Posterior vena cava (tissue), 2 donors: ENCODE measurements at regions of chr6 and their contacts with region 1.

Region 1: GRCh38 chr6:84774157-84774984 is 10.0 kb upstream of the TBX18 start:
- DNase-seq: peak; percentile 90

Region 2: DNA sequence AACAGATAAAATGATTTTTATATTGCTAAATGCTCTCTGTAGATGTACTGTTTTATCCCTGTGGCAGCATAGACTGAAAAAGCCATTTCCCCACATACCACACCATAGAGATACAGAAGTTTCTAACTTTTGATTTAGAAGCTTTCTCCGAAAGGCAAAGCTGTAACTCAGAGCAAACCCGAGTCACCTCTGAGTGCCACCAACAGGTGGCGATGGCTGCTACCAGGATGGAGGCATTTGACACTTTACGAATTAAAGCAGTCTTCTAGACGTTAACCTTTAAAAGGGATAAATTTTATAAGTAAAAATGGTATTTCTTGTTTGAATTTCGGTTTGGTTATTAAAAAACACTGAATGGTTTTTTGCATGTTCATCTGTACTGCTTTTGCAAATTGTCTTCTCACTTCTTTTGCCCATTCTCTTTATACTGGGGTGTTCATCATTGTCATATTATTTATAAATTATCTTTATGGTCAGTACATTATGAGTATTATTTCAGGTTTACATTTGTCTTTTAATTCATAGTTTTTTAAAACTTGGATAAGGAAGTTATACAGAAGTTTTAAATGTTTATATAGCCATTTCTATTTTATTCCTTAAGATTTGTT is 346.0 kb before region 1 on chr6:
- intact Hi-C with region 1: loop called (anchors 10 kb)
- DNase-seq: peak; percentile 86

Region 3: DNA sequence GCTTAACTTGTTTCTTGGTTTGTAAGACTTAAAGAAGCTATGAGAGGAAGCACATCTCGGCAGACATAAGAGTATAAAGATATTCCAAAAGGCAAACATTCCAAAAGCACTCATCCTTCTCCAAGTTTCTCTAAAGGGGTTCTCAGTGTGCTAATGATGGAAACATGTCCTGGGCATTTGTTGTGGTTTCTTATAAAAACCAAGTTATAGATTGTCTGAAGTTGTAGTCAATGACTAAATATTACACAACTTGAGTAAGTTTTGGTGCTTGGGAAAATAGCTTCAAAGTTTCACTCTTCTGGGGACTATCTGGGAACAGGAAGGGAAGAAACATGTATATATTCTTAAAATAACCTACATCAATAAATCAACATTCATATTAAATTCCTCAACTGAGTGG is 118.3 kb after region 1 on chr6:
- intact Hi-C with region 1: no loop called
- DNase-seq: no peak

Region 4: GRCh38 chr6:85113923-85114580 is 339.7 kb after region 1 on chr6:
- intact Hi-C with region 1: loop called in 1 of 2 experiments (anchors 10 kb)
- DNase-seq: no peak

Region 5: DNA sequence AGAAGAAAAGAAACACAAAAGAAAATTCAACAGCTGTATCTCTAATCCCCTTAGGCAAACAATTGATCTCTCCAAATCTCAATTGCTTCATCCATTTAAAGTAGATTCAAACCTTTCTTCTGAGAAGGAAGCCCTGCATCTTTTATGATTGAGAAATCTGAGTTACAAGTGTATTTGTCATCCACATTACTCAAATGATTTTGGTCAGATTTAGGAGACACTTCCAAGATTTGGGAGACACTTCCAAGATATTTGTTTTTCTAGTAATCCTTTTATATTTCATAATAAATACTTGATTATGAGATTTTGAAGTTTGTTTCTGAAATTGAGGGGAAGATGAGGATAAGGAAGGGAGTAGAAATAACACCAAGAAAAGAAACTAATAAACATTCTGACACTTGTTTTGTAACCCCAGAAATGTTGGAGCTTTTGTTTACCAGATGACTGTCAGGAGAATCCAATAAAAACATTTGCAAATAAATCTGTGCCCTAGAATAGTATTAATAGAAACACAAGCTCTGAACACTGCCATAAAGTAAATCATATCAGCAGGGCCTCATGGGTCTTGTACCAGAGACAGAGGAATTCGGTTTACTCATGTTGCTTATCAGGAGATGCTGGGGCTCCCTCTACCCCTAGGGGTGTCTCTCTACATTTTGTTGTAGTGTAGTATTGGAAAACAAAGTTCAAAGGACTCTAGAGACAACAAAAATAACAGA is 361.2 kb after region 1 on chr6:
- intact Hi-C with region 1: loop called in 1 of 2 experiments (anchors 10 kb)
- DNase-seq: no peak

Region 6: GRCh38 chr6:85323435-85324040 is 549.2 kb after region 1 on chr6:
- intact Hi-C with region 1: loop called in 1 of 2 experiments (anchors 10 kb)
- DNase-seq: peak; percentile 83